Activated naive CD4-positive, alpha-beta T cell treated with anti-CD3 and anti-CD28 coated beads for 36 hours (primary cell): ENCODE measurements at regions of chr10 and their contacts with region 1.

Region 1: DNA sequence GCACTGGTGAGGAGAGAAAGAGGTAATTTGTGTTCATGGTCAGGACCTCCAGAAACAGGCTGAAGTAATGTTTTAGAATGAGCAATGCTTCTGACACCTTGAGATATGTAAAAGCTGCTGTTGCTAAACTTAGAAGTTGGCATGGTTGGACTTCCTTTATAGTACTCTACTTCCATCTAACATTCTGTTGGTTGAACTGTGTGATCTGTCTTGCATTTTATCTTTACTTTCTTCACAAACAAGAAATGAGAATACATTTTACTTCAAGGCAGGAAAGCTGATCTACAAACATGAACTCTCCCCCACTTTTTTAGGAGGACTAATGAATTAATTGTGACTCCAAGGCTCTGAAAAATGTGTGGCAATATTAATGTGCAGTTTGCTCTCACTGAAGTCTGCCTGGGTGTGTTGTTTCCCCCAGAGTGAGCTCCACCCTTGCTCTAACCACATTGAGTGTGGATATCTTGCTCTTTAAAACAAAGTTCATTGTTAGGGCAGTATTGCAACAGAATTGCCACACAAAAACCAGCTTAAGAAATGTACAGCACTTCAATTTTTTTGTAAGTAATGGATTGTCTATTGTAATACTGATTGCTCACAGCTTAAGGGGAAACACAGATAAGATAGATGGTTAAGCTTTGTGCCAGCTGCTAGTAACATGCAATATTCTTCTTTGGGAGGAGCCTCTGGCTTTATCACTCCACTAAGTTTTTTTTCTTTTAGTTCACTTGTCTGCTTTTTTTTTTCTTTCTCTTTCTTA is 69.0 kb downstream of the ADD3 start:
- DNase-seq: no peak
- H3K4me3 Mint-ChIP-seq: peak overlapping the region; percentile 70
- H3K27ac Mint-ChIP-seq: peak overlapping the region; percentile 92
- H3K4me1 Mint-ChIP-seq: peaks cover 87% of the 10 kb centered on the region
- H3K27me3 Mint-ChIP-seq: no peaks in the 10 kb centered on the region

Region 2: GRCh38 chr10:108982159-108982558 is 1094.6 kb before region 1 on chr10:
- CTCF ChIA-PET with region 1: no interaction called
- intact Hi-C with region 1: no loop called
- DNase-seq: no peak
- H3K4me3 Mint-ChIP-seq: no peak overlapping the region
- H3K27ac Mint-ChIP-seq: no peak overlapping the region
- H3K4me1 Mint-ChIP-seq: no peaks in the 10 kb centered on the region
- H3K27me3 Mint-ChIP-seq: no peaks in the 10 kb centered on the region

Region 3: GRCh38 chr10:110059925-110060324 is 16.8 kb before region 1 on chr10:
- CTCF ChIA-PET with region 1: interaction called, 5 read pairs
- intact Hi-C with region 1: loop called (anchors 1 kb)
- DNase-seq: no peak
- H3K4me3 Mint-ChIP-seq: no peak overlapping the region
- H3K27ac Mint-ChIP-seq: peak overlapping the region; percentile 75
- H3K4me1 Mint-ChIP-seq: peaks cover 84% of the 10 kb centered on the region
- H3K27me3 Mint-ChIP-seq: no peaks in the 10 kb centered on the region

Region 4: GRCh38 chr10:110101464-110102144 is 24.9 kb after region 1 on chr10:
- CTCF ChIA-PET with region 1: interaction called, 5 read pairs
- intact Hi-C with region 1: loop called (anchors 1 kb)
- DNase-seq: no peak
- H3K4me3 Mint-ChIP-seq: no peak overlapping the region
- H3K27ac Mint-ChIP-seq: peak overlapping the region; percentile 89
- H3K4me1 Mint-ChIP-seq: peaks cover 76% of the 10 kb centered on the region
- H3K27me3 Mint-ChIP-seq: no peaks in the 10 kb centered on the region